ENCODE measurements at regions of chr5 and their contacts with region 1.

Region 1: DNA sequence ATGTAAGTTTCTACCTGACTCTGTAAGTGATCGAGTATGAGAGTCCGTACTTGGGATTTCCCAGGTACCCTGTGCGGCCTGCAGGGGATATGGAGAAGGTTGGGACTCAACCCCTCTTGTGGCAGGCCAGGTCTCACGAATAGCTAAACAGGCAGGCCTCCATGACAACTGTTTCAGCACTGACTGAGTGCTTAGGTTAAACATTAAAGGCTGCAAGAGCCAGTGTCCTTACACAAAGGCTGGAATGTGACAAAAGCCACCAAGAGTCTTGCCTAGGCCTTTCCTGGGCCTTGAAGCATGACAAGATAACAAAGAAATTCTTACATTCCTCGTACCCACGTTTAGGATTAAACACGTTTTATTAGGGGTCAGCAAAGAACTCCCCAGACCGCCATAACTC is 58.6 kb downstream of the THBS4 start:
- DNase-seq: no peak
- H3K4me3 Mint-ChIP-seq: no peak overlapping the region
- H3K27ac Mint-ChIP-seq: no peak overlapping the region
- H3K4me1 Mint-ChIP-seq: peaks cover 15% of the 10 kb centered on the region
- H3K27me3 Mint-ChIP-seq: no peaks in the 10 kb centered on the region

Region 2: GRCh38 chr5:80125962-80126480 is 32.2 kb after region 1 on chr5:
- CTCF ChIA-PET with region 1: interaction called, 18 read pairs
- POLR2A ChIA-PET with region 1: interaction called, 6 read pairs
- DNase-seq: no peak
- H3K4me3 Mint-ChIP-seq: peak overlapping the region; percentile 1
- H3K27ac Mint-ChIP-seq: peak overlapping the region; percentile 75
- H3K4me1 Mint-ChIP-seq: peaks cover 38% of the 10 kb centered on the region
- H3K27me3 Mint-ChIP-seq: no peaks in the 10 kb centered on the region

Region 3: DNA sequence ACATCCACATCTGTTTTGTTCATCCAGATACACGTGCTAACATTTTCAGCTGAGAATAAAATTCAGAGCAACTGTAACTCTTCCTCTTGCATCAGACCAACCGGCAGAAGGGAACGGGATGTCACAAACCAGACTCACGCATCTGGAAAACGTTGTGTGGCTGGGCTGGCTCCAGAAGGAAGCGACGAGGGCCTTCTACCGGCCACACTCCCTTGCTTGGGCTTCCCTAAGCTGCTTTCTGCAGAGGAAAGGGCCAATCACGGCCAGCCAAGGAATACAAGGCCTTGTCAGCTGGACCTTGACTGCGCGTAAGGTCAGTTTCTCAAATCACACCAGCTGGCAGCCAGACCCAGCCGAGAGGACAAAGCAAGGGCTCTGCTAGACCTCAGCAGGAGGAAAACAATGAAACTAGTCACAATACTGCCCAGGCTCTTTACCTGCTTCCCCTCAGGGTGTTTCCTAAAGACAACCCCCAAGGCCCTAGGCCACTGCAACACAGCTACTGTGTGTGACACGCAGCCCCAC is 47.4 kb after region 1 on chr5:
- CTCF ChIA-PET with region 1: interaction called, 12 read pairs
- POLR2A ChIA-PET with region 1: interaction called, 10 read pairs
- DNase-seq: no peak
- H3K4me3 Mint-ChIP-seq: no peak overlapping the region
- H3K27ac Mint-ChIP-seq: peak overlapping the region; percentile 90
- H3K4me1 Mint-ChIP-seq: peaks cover 76% of the 10 kb centered on the region
- H3K27me3 Mint-ChIP-seq: no peaks in the 10 kb centered on the region

Region 4: GRCh38 chr5:80216753-80217596 is 123.2 kb after region 1 on chr5:
- CTCF ChIA-PET with region 1: interaction called, 10 read pairs
- POLR2A ChIA-PET with region 1: no interaction called
- DNase-seq: peak; percentile 54
- H3K4me3 Mint-ChIP-seq: peak overlapping the region; percentile 69
- H3K27ac Mint-ChIP-seq: peak overlapping the region; percentile 82
- H3K4me1 Mint-ChIP-seq: peaks cover 79% of the 10 kb centered on the region
- H3K27me3 Mint-ChIP-seq: no peaks in the 10 kb centered on the region

Region 5: GRCh38 chr5:80308526-80308925 is 214.7 kb after region 1 on chr5:
- CTCF ChIA-PET with region 1: interaction called, 199 read pairs
- POLR2A ChIA-PET with region 1: interaction called, 6 read pairs
- DNase-seq: no peak
- H3K4me3 Mint-ChIP-seq: no peak overlapping the region
- H3K27ac Mint-ChIP-seq: no peak overlapping the region
- H3K4me1 Mint-ChIP-seq: no peaks in the 10 kb centered on the region
- H3K27me3 Mint-ChIP-seq: peaks cover 1% of the 10 kb centered on the region

Region 6: GRCh38 chr5:80453366-80453765 is 359.6 kb after region 1 on chr5:
- CTCF ChIA-PET with region 1: no interaction called
- POLR2A ChIA-PET with region 1: no interaction called
- DNase-seq: no peak
- H3K4me3 Mint-ChIP-seq: no peak overlapping the region
- H3K27ac Mint-ChIP-seq: no peak overlapping the region
- H3K4me1 Mint-ChIP-seq: no peaks in the 10 kb centered on the region
- H3K27me3 Mint-ChIP-seq: no peaks in the 10 kb centered on the region

Measured in activated CD4-positive, alpha-beta memory T cell treated with anti-CD3 and anti-CD28 coated beads, Interleukin-2, amount 10 ng/mL, durations not matched to agents 7 days and 5 days (primary cell).